GM12878 (cell line): ENCODE measurements at regions of chr2 and their contacts with region 1.

Region 1: GRCh38 chr2:31967790-31968189 is 43.0 kb downstream of the MEMO1 start:
- DNase-seq: no peak
- ATAC-seq: no peak
- H3K4me3 ChIP-seq: no peak overlapping the region
- H3K27ac ChIP-seq: no peak overlapping the region
- H3K4me1 ChIP-seq: peaks cover 6% of the 10 kb centered on the region
- H3K27me3 ChIP-seq: no peaks in the 10 kb centered on the region
- CTCF ChIP-seq: no peak
- EP300 ChIP-seq: no peak
- POLR2A ChIP-seq: no peak
- RAD21 ChIP-seq: no peak

Region 2: DNA sequence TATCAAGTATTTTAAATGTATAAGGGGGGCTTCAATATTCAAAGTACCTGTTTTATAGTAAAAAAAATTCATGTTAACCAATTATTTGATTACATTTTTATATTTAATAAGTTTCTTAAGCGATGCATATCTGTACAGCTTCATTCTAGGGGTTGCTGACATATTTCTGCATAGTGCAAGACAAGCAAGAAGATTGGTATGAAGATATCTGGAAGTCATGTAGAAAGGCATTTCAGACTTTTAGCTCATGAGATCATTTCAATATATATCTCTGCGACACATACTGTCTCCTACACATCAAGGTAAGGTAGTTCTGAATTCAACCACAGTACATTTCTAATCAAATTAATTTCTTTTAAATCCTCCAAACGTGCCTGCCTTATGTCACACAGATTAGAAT is 30.0 kb before region 1 on chr2:
- CTCF ChIA-PET with region 1: no interaction called
- POLR2A ChIA-PET with region 1: no interaction called
- RAD21 ChIA-PET with region 1: no interaction called
- SMC1A ChIA-PET with region 1: no interaction called
- in situ Hi-C with region 1: no loop called
- intact Hi-C with region 1: no loop called
- DNase-seq: no peak
- ATAC-seq: no peak
- H3K4me3 ChIP-seq: no peak overlapping the region
- H3K27ac ChIP-seq: no peak overlapping the region
- H3K4me1 ChIP-seq: no peaks in the 10 kb centered on the region
- H3K27me3 ChIP-seq: no peaks in the 10 kb centered on the region
- CTCF ChIP-seq: no peak
- EP300 ChIP-seq: no peak
- POLR2A ChIP-seq: no peak
- RAD21 ChIP-seq: no peak

Region 3: GRCh38 chr2:32003791-32004190 is 36.0 kb after region 1 on chr2:
- CTCF ChIA-PET with region 1: interaction called, 3 read pairs
- POLR2A ChIA-PET with region 1: no interaction called
- RAD21 ChIA-PET with region 1: interaction called, 5 read pairs
- SMC1A ChIA-PET with region 1: interaction called, 12 read pairs
- in situ Hi-C with region 1: no loop called
- intact Hi-C with region 1: loop called (anchors 5 kb)
- DNase-seq: no peak
- ATAC-seq: peak; percentile 5; the same call in 2 of the 3 replicates
- H3K4me3 ChIP-seq: no peak overlapping the region
- H3K27ac ChIP-seq: peak overlapping the region; percentile 24
- H3K4me1 ChIP-seq: peaks cover 19% of the 10 kb centered on the region
- H3K27me3 ChIP-seq: no peaks in the 10 kb centered on the region
- CTCF ChIP-seq: no peak
- EP300 ChIP-seq: no peak
- POLR2A ChIP-seq: no peak
- RAD21 ChIP-seq: no peak

Region 4: GRCh38 chr2:32436150-32436549 is 468.4 kb after region 1 on chr2:
- CTCF ChIA-PET with region 1: no interaction called
- POLR2A ChIA-PET with region 1: no interaction called
- RAD21 ChIA-PET with region 1: no interaction called
- SMC1A ChIA-PET with region 1: no interaction called
- in situ Hi-C with region 1: no loop called
- intact Hi-C with region 1: no loop called
- DNase-seq: no peak
- ATAC-seq: no peak
- H3K4me3 ChIP-seq: no peak overlapping the region
- H3K27ac ChIP-seq: no peak overlapping the region
- H3K4me1 ChIP-seq: no peaks in the 10 kb centered on the region
- H3K27me3 ChIP-seq: no peaks in the 10 kb centered on the region
- CTCF ChIP-seq: no peak
- EP300 ChIP-seq: no peak
- POLR2A ChIP-seq: no peak
- RAD21 ChIP-seq: no peak